ENCODE measurements at regions of chr2 and their contacts with region 1.

Region 1: GRCh38 chr2:117814417-117815264 is at the start of gene DDX18:
- DNase-seq: peak; percentile 99
- H3K4me3 ChIP-seq: peak within 1 kb of the TSS; percentile 90
- H3K27ac ChIP-seq: peak within 1 kb of the TSS; percentile 86
- H3K4me1 ChIP-seq: peaks cover 35% of the 10 kb centered on the region
- CTCF ChIP-seq: peak; percentile 100
- total RNA-seq, gene DDX18: 61.1 and 68.5 TPM in 2 replicates

Region 2: DNA sequence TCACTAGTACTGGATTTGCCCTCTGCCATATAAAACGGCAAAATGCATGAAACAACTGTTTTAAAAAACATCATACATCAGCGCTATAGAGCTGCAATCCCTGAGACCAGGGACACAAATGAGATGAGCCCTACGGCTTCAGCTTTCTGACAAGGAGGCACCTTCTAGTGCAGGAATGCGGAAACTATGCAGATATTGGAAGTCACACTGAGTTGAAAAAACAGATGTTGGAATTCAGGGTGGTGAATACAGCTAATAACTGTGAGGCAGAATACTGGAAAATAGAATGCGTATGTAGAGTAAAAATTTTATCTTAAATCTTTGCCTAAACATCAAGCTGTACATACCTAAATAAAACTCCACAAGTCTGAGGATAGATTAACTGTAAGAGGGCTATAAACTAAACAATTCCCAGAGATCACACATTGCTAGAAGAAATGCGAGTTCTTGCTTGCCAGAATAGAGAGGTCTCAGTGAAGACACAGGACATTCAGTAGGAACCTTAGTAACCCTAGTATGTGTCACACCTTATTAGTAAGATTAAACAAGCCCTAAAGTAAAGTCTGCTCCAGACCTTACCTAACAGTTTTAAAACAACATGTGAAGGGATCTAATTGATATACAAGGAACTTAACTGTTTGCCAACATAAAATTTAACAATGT is 541.5 kb before region 1 on chr2:
- CTCF ChIA-PET with region 1: no interaction called
- POLR2A ChIA-PET with region 1: no interaction called
- intact Hi-C with region 1: no loop called
- DNase-seq: no peak
- H3K4me3 ChIP-seq: no peak overlapping the region
- H3K27ac ChIP-seq: no peak overlapping the region
- H3K4me1 ChIP-seq: no peaks in the 10 kb centered on the region
- CTCF ChIP-seq: no peak

Region 3: GRCh38 chr2:117917223-117917917 is 102.7 kb after region 1 on chr2:
- CTCF ChIA-PET with region 1: no interaction called
- POLR2A ChIA-PET with region 1: no interaction called
- intact Hi-C with region 1: loop called (anchors 1 kb)
- DNase-seq: no peak
- H3K4me3 ChIP-seq: peak overlapping the region; percentile 28
- H3K27ac ChIP-seq: peak overlapping the region; percentile 100
- H3K4me1 ChIP-seq: peaks cover 56% of the 10 kb centered on the region
- CTCF ChIP-seq: 0 out of 2 replicates have a peak, but pooled peaks have one; percentile 21

Region 4: DNA sequence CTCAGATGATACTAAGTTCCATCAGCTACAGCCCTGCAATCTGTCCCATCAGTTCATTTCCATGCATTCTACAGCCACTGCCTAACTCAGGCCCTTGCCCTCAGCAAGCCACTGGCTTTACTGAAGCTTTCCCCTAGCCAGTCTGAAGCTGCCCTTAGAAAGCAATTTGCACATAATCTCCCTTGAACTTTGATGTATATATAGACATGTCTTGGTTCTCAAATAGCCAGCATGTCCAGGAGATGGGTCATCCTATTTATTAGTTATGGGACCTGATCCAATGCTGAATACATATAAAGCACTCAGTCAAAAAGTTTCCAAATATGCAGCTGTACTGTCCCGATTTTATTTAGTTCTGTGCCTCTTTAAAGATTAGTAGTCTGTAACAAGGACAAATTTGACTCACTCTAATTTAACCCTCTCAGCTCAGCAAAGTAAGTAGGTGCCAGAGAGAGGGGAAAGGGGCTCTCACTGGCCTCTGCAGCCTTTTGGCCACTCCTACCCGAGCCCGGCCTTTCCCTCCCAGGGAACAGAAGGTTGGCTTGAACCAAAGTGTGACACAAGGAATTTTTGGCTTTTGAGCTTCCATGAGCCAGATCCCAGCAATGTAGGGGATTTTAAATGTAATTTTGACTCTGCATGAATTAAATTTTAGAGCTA is 128.5 kb after region 1 on chr2:
- CTCF ChIA-PET with region 1: no interaction called
- POLR2A ChIA-PET with region 1: no interaction called
- intact Hi-C with region 1: no loop called
- DNase-seq: no peak
- H3K4me3 ChIP-seq: no peak overlapping the region
- H3K27ac ChIP-seq: no peak overlapping the region
- H3K4me1 ChIP-seq: peaks cover 4% of the 10 kb centered on the region
- CTCF ChIP-seq: no peak

Region 5: DNA sequence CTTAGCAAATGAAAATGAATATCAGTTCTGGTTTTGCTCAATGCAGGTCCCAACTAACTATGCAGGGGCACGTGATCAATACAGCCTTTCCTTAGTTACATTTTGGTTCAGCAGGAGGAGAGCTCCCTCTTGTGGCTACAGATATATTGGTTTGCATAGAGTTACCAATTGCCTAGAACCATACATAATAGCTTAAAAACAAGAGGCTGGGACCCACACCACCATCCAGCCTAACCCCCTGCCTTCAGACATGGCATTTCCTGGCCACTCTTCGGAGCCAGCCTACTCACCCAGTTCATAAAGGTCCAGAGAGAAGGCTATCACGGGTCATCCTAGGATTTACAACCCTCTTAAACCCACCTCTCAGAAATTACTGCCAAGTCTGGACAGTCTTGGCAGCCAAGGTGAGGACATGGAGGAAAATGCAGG is 188.8 kb after region 1 on chr2:
- CTCF ChIA-PET with region 1: interaction called, 31 read pairs
- POLR2A ChIA-PET with region 1: interaction called, 25 read pairs
- intact Hi-C with region 1: loop called (anchors 1 kb)
- DNase-seq: peak; percentile 82
- H3K4me3 ChIP-seq: no peak overlapping the region
- H3K27ac ChIP-seq: no peak overlapping the region
- H3K4me1 ChIP-seq: peaks cover 14% of the 10 kb centered on the region
- CTCF ChIP-seq: peak; percentile 97

Region 6: GRCh38 chr2:118013724-118014491 is 199.3 kb after region 1 on chr2 and contains the start of gene CCDC93:
- CTCF ChIA-PET with region 1: interaction called, 3 read pairs
- POLR2A ChIA-PET with region 1: interaction called, 11 read pairs
- intact Hi-C with region 1: no loop called
- DNase-seq: peak; percentile 87
- H3K4me3 ChIP-seq: peak within 1 kb of the TSS; percentile 100
- H3K27ac ChIP-seq: peak within 1 kb of the TSS; percentile 58
- H3K4me1 ChIP-seq: peaks cover 25% of the 10 kb centered on the region
- CTCF ChIP-seq: no peak
- total RNA-seq, gene CCDC93: 25.6 and 28.2 TPM in 2 replicates

Region 7: DNA sequence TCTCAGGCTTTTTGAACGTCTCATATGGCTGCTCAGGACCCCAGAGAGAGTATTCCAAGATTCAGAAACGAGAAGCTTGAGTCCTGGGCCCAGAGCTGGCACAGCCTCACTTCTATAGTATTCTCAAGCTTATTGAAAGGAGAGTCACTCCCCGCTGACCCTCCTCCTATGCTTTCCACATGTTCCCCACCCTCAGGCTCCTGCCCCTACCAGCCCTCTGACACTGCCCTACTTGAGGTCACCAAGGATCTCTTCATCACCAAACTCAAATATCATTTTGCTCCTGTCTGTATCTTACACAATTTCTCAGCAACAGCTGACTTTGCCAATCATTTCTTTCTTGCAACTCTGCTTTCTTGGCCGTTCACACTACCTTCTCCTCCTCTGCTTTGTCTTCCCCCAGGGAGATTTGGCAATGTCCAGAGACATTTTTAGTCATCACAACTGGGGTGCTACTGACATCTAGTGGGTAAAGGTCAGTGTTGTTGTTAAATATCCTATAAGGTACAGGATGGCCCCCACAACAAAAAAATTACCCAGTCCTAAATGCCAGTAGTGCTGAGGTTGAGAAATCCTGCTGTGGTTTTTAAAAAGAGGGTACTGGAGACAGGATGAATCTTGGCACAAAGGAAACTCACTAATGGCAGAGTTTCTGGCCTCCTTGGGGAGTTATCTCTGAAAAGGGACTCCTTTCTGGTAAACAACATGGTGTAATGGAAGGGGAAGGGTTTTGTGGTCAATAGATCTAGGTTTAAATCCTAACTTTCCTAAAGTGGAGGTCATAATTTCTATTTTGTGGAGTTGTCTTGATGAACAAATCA is 246.7 kb after region 1 on chr2:
- CTCF ChIA-PET with region 1: no interaction called
- POLR2A ChIA-PET with region 1: interaction called, 4 read pairs
- intact Hi-C with region 1: loop called (anchors 2 kb)
- DNase-seq: peak; percentile 78
- H3K4me3 ChIP-seq: no peak overlapping the region
- H3K27ac ChIP-seq: no peak overlapping the region
- H3K4me1 ChIP-seq: peaks cover 47% of the 10 kb centered on the region
- CTCF ChIP-seq: peak; percentile 92

Region 8: DNA sequence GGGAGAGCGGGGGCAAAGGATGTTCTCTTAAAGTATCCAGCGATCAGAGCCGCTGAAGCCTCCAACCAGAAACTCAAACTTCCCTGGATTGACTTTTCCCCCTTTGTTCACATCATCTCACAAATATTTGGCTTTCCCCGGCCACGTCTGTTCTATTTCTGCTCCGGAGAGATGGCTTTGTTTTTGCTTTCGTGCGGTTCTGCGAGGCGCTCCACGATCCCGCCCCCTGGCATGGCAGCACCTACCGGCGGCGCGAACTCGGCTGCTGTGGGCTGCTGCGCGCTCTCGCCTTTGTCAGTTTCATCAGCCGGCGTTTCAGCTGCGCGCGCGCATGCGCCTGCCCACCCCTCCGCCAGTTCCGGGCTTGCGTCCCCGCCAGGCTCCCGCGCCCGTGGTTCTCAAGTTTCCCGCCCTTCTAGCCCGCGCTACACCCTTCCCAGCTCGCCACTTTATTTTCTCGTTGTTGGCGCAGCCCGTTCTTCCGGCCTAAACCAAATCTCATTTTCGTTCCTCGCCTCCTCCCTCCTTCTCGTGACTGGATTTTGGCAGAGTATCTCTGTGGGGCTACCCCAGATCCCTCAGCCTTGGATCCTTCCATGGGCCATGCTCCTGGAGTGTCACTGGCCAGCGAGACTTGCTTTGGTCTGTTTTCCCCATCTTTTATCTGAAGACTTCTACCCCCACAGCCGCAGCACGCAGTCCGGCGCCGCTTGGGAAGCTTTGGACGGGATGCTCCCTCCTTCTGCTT is 371.6 kb after region 1 on chr2:
- CTCF ChIA-PET with region 1: no interaction called
- POLR2A ChIA-PET with region 1: no interaction called
- intact Hi-C with region 1: loop called (anchors 5 kb)
- DNase-seq: peak; percentile 81
- H3K4me3 ChIP-seq: peak overlapping the region; percentile 69
- H3K27ac ChIP-seq: peak overlapping the region; percentile 6
- H3K4me1 ChIP-seq: peaks cover 7% of the 10 kb centered on the region
- CTCF ChIP-seq: no peak

Measured in OCI-LY7 (cell line).